PC-3 (cell line): ENCODE measurements at regions of chr1 and their contacts with region 1.

Region 1: GRCh38 chr1:55284852-55285251 is 69.7 kb upstream of the USP24 start:
- DNase-seq: peak; percentile 67
- ATAC-seq: peak; percentile 68
- H3K4me3 ChIP-seq: no peak overlapping the region
- H3K27ac ChIP-seq: no peak overlapping the region
- H3K4me1 ChIP-seq: peaks cover 10% of the 10 kb centered on the region
- H3K27me3 ChIP-seq: no peaks in the 10 kb centered on the region
- CTCF ChIP-seq: peak; percentile 82

Region 2: GRCh38 chr1:55443175-55443915 is 158.5 kb after region 1 on chr1:
- CTCF ChIA-PET with region 1: no interaction called
- POLR2A ChIA-PET with region 1: no interaction called
- intact Hi-C with region 1: loop called (anchors 10 kb)
- DNase-seq: peak; percentile 91
- ATAC-seq: peak; percentile 87
- H3K4me3 ChIP-seq: no peak overlapping the region
- H3K27ac ChIP-seq: peak overlapping the region; percentile 97
- H3K4me1 ChIP-seq: peaks cover 39% of the 10 kb centered on the region
- H3K27me3 ChIP-seq: no peaks in the 10 kb centered on the region
- CTCF ChIP-seq: 0 out of 2 replicates have a peak, but pooled peaks have one; percentile 11

Region 3: DNA sequence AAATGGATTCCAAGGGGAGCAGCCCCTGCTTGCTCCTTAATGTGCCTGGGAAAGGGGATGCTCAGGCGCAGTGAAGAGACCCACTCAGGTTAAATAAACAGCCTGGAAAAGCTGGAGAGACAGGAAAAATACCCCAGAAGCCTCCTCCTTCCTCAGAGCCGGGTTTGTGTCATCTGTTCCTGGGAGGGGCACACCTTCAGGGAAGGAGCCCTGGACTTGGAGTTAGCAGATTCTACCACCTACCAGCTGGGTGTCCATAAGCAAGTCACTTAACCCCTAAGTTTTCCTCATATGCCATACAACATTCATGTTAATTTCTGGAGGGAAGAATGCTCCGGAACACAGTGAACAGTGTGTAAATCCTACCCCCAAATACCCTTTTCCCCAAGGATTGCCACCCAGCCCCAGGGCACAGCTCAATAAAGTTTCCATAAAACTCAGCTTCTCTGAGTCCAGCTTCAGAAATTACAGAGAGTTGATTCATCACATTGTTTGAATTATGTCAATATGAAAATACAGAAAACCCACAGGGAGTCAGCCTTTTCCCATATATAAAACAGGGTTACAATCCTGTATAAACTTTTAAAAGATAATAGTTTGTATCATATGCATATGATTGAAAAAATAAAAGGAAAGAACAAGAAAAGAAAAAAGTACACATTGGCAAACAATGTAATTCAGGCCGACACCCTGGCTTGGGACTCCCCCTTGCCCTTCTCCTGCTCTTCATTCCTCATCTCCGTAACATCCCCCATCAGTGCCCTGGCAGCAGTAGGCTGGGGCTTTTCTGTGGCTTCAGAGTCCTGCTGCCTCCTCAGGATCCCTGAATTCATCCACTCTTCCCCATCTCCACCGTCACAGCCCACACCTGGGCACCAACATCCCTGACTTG is 222.1 kb after region 1 on chr1:
- CTCF ChIA-PET with region 1: no interaction called
- POLR2A ChIA-PET with region 1: no interaction called
- intact Hi-C with region 1: loop called (anchors 2 kb)
- DNase-seq: peak; percentile 96
- ATAC-seq: peak; percentile 78
- H3K4me3 ChIP-seq: peak overlapping the region; percentile 33; the same call in 1 of the 2 replicates
- H3K27ac ChIP-seq: peak overlapping the region; percentile 95
- H3K4me1 ChIP-seq: peaks cover 49% of the 10 kb centered on the region
- H3K27me3 ChIP-seq: no peaks in the 10 kb centered on the region
- CTCF ChIP-seq: peak; percentile 49; the same call in 1 of the 2 replicates

Region 4: GRCh38 chr1:56709269-56709880 is 1424.5 kb after region 1 on chr1:
- CTCF ChIA-PET with region 1: no interaction called
- POLR2A ChIA-PET with region 1: no interaction called
- intact Hi-C with region 1: loop called (anchors 1 kb)
- DNase-seq: peak; percentile 87
- ATAC-seq: peak; percentile 70
- H3K4me3 ChIP-seq: no peak overlapping the region
- H3K27ac ChIP-seq: no peak overlapping the region
- H3K4me1 ChIP-seq: peaks cover 15% of the 10 kb centered on the region
- H3K27me3 ChIP-seq: no peaks in the 10 kb centered on the region
- CTCF ChIP-seq: peak; percentile 77

Region 5: GRCh38 chr1:56821140-56821797 is 1536.4 kb after region 1 on chr1:
- CTCF ChIA-PET with region 1: no interaction called
- POLR2A ChIA-PET with region 1: no interaction called
- intact Hi-C with region 1: loop called (anchors 5 kb)
- DNase-seq: peak; percentile 89
- ATAC-seq: peak; percentile 85
- H3K4me3 ChIP-seq: peak overlapping the region; percentile 46; the same call in 1 of the 2 replicates
- H3K27ac ChIP-seq: peak overlapping the region; percentile 44
- H3K4me1 ChIP-seq: peaks cover 14% of the 10 kb centered on the region
- H3K27me3 ChIP-seq: 0 out of 2 replicates have a peak, but pooled peaks cover 5% of the 10 kb centered on the region
- CTCF ChIP-seq: peak; percentile 97